ENCODE measurements at regions of chr15 and their contacts with region 1.

Region 1: GRCh38 chr15:90618330-90619125 is 88.8 kb downstream of the CRTC3 start:
- DNase-seq: no peak
- H3K4me3 ChIP-seq: no peak overlapping the region
- H3K27ac ChIP-seq: peak overlapping the region; percentile 19 to 63 (median 35)
- H3K4me1 ChIP-seq: peaks cover 0 to 25% (median 2%) of the 10 kb centered on the region in 4 donors
- H3K27me3 ChIP-seq: no peaks in the 10 kb centered on the region
- CTCF ChIP-seq: no peak
- EP300 ChIP-seq: no peak
- POLR2A ChIP-seq: no peak

Region 2: GRCh38 chr15:90529371-90530249 is 88.9 kb before region 1 on chr15 and contains the start of gene CRTC3:
- in situ Hi-C with region 1: loop called in 1 of 4 experiments (anchors 25 kb)
- intact Hi-C with region 1: loop called (anchors 10 kb)
- DNase-seq: peak; percentile 60
- H3K4me3 ChIP-seq: peak within 1 kb of the TSS; percentile 66 to 84 (median 74)
- H3K27ac ChIP-seq: peak within 1 kb of the TSS; percentile 92 to 96 (median 94)
- H3K4me1 ChIP-seq: peaks cover 7 to 27% (median 15%) of the 10 kb centered on the region in 4 donors
- H3K27me3 ChIP-seq: no peaks in the 10 kb centered on the region
- CTCF ChIP-seq: no peak
- EP300 ChIP-seq: no peak
- POLR2A ChIP-seq: no peak
- total RNA-seq, gene CRTC3: 23.0 to 35.9 (median 24.1) TPM

Region 3: GRCh38 chr15:90560229-90560776 is 58.2 kb before region 1 on chr15:
- in situ Hi-C with region 1: no loop called
- intact Hi-C with region 1: no loop called
- DNase-seq: peak; percentile 38
- H3K4me3 ChIP-seq: no peak overlapping the region
- H3K27ac ChIP-seq: peak overlapping the region; percentile 78 to 87 (median 82)
- H3K4me1 ChIP-seq: peaks cover 52 to 97% (median 72%) of the 10 kb centered on the region in 4 donors
- H3K27me3 ChIP-seq: no peaks in the 10 kb centered on the region
- CTCF ChIP-seq: no peak
- EP300 ChIP-seq: peak; percentile 45
- POLR2A ChIP-seq: no peak

Measured in transverse colon (tissue), 4 donors.